CD4-positive, alpha-beta memory T cell (primary cell): ENCODE measurements at regions of chr2 and their contacts with region 1.

Region 1: GRCh38 chr2:148644883-148645538 is 460 bp downstream of the EPC2 start:
- DNase-seq: peak; percentile 93 to 98 (median 95)
- H3K4me3 ChIP-seq: peak overlapping the region; percentile 88 to 99
- H3K4me3 Mint-ChIP-seq: peak overlapping the region; percentile 91 to 99 (median 95)
- H3K27ac ChIP-seq: peak overlapping the region; percentile 87
- H3K27ac Mint-ChIP-seq: peak overlapping the region; percentile 93 to 99 (median 97)
- H3K4me1 ChIP-seq: peaks cover 48% of the 10 kb centered on the region
- H3K4me1 Mint-ChIP-seq: peaks cover 24 to 45% (median 36%) of the 10 kb centered on the region in 4 donors
- H3K27me3 ChIP-seq: no peaks in the 10 kb centered on the region
- H3K27me3 Mint-ChIP-seq: no peaks in the 10 kb centered on the region

Region 2: GRCh38 chr2:148020111-148021058 is 624.6 kb before region 1 on chr2 and contains the start of gene ORC4:
- CTCF ChIA-PET with region 1: interaction called, 4 read pairs
- POLR2A ChIA-PET with region 1: interaction called, 27 read pairs
- intact Hi-C with region 1: loop called (anchors 1 kb)
- DNase-seq: peak; percentile 94 to 99 (median 97)
- H3K4me3 ChIP-seq: peak within 1 kb of the TSS; percentile 87 to 93
- H3K4me3 Mint-ChIP-seq: peak within 1 kb of the TSS; percentile 92 to 100 (median 99)
- H3K27ac ChIP-seq: peak within 1 kb of the TSS; percentile 89
- H3K27ac Mint-ChIP-seq: peak within 1 kb of the TSS; percentile 85 to 98 (median 97)
- H3K4me1 ChIP-seq: peaks cover 57% of the 10 kb centered on the region
- H3K4me1 Mint-ChIP-seq: peaks cover 44 to 83% (median 63%) of the 10 kb centered on the region in 4 donors
- H3K27me3 ChIP-seq: no peaks in the 10 kb centered on the region
- H3K27me3 Mint-ChIP-seq: no peaks in the 10 kb centered on the region
- total RNA-seq, gene ORC4: 59.4 to 60.1 TPM

Region 3: DNA sequence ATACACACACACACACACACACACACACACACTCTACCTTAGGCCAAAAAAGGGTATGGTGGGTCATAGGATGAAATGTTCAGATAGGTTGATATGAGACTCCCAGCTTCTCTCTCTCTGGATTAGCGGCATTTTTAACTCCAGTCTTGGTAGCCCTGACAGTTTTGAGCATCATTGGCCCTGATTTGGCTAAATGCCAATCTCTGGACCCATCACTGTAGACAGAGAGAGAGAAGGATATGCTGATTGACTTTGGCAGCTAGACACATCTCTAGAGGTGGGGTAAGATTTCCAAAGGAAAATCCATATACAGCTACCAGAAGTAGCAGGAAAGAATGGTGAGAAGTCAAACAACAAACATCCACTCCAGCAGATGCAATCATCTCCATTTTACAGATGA is 314.9 kb before region 1 on chr2:
- CTCF ChIA-PET with region 1: no interaction called
- POLR2A ChIA-PET with region 1: no interaction called
- intact Hi-C with region 1: no loop called
- DNase-seq: no peak
- H3K4me3 ChIP-seq: no peak overlapping the region
- H3K4me3 Mint-ChIP-seq: no peak overlapping the region
- H3K27ac ChIP-seq: no peak overlapping the region
- H3K27ac Mint-ChIP-seq: no peak overlapping the region
- H3K4me1 ChIP-seq: no peaks in the 10 kb centered on the region
- H3K4me1 Mint-ChIP-seq: peaks cover 0 to 2% (median 0%) of the 10 kb centered on the region in 4 donors
- H3K27me3 ChIP-seq: no peaks in the 10 kb centered on the region
- H3K27me3 Mint-ChIP-seq: no peaks in the 10 kb centered on the region

Region 4: GRCh38 chr2:148552675-148553331 is 92.2 kb before region 1 on chr2:
- CTCF ChIA-PET with region 1: interaction called, 4 read pairs
- POLR2A ChIA-PET with region 1: interaction called, 50 read pairs
- intact Hi-C with region 1: loop called (anchors 1 kb)
- DNase-seq: peak; percentile 43 to 58 (median 54)
- H3K4me3 ChIP-seq: peak overlapping the region; percentile 62 to 67
- H3K4me3 Mint-ChIP-seq: no peak overlapping the region
- H3K27ac ChIP-seq: peak overlapping the region; percentile 61
- H3K27ac Mint-ChIP-seq: no peak overlapping the region
- H3K4me1 ChIP-seq: peaks cover 17% of the 10 kb centered on the region
- H3K4me1 Mint-ChIP-seq: peaks cover 0 to 5% (median 3%) of the 10 kb centered on the region in 4 donors
- H3K27me3 ChIP-seq: no peaks in the 10 kb centered on the region
- H3K27me3 Mint-ChIP-seq: no peaks in the 10 kb centered on the region

Region 5: DNA sequence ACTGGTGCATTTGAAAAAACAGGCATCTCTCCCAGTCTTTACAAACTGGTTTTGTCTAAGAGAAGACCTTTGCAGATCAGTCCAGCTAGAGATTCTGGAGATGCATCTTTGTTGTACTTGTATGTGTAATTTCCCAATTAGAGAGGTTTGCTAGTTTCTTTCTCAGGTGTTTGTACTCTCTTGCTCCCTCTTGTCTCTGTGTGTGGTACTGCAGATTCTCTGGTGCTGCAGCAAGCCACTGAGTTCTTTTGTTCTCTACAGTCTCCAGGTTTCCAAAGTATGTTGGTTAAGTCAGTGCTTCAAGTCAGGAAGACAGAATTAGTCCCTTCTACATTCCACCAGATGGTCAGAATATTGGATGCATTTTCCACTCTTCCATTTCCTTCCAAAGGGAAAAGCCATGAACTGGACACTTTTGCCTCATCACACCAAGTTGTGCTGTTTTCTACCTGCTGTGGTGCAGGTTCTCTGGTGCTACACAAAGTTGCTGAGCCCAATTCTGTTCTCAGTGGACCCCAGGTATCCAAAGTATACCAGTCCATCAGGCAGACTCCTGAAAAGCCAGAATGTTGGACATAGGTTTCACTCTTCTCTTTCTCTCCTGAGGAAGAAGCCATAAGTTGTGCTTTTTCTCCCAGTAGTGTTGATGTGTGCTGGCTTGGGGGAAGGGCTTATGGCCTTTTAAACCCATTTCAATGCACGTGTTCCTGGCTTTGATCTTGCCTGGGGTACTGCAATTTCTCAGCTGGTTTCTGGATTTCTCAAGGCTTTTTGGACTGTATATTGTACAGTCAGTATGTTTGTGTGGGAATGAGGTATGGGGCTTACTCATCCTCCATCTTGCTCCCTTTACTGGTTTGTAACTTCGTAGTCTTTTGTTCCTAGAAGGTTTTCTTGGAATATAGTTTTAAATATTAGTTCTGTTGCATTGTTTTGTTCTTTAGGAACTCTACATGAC is 29.3 kb after region 1 on chr2:
- CTCF ChIA-PET with region 1: no interaction called
- POLR2A ChIA-PET with region 1: interaction called, 6 read pairs
- intact Hi-C with region 1: loop called (anchors 2 kb)
- DNase-seq: peak; percentile 43 to 53 (median 48)
- H3K4me3 ChIP-seq: no peak overlapping the region
- H3K4me3 Mint-ChIP-seq: peak overlapping the region in 6 of 8 donors; percentile 41 to 79 (median 59)
- H3K27ac ChIP-seq: no peak overlapping the region
- H3K27ac Mint-ChIP-seq: peak overlapping the region in 6 of 7 donors; percentile 0 to 84 (median 50)
- H3K4me1 ChIP-seq: peaks cover 49% of the 10 kb centered on the region
- H3K4me1 Mint-ChIP-seq: peaks cover 48 to 83% (median 65%) of the 10 kb centered on the region in 4 donors
- H3K27me3 ChIP-seq: no peaks in the 10 kb centered on the region
- H3K27me3 Mint-ChIP-seq: no peaks in the 10 kb centered on the region

Region 6: DNA sequence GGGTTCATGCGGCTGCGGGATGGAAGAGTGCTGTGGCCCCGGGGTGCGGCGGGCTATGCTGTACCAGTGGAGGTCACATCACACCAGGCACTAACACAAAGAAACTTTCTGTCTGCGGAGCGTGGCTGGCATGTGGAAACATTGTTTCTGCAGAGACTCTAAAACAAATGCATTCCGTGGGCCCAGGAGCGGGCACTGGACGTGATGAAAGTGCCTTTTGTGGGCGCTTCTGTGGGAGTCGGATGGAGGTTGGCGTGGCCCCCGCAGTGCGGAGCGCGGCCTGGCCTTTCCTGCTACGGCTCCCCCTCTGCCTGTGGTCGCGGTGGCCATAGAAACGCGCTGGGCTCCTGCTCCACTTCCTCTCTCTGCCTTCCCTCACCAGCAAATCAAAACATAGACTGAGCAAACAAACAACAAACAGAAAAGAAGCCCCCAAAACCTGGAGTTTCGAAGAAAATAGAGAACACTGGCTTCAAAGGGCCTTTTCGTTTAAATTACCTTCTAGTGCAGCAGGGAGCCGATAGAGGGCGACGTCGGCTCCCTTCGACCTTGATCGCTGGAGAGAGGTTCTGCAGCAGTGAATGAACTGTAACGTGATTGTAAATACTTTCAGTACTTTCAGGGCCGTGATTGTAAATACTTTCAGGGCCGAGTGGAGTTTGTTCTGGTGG is 281.4 kb after region 1 on chr2:
- CTCF ChIA-PET with region 1: interaction called, 4 read pairs
- POLR2A ChIA-PET with region 1: no interaction called
- intact Hi-C with region 1: loop called (anchors 2 kb)
- DNase-seq: peak; percentile 43 to 59 (median 56)
- H3K4me3 ChIP-seq: peak overlapping the region in 1 of 2 donors; percentile 39
- H3K4me3 Mint-ChIP-seq: peak overlapping the region; percentile 84 to 95 (median 88)
- H3K27ac ChIP-seq: peak overlapping the region; percentile 25
- H3K27ac Mint-ChIP-seq: peak overlapping the region; percentile 72 to 94 (median 93)
- H3K4me1 ChIP-seq: peaks cover 20% of the 10 kb centered on the region
- H3K4me1 Mint-ChIP-seq: peaks cover 16 to 30% (median 21%) of the 10 kb centered on the region in 4 donors
- H3K27me3 ChIP-seq: no peaks in the 10 kb centered on the region
- H3K27me3 Mint-ChIP-seq: no peaks in the 10 kb centered on the region